Activated naive CD4-positive, alpha-beta T cell treated with anti-CD3 and anti-CD28 coated beads for 36 hours (primary cell): ENCODE measurements at regions of chr6 and their contacts with region 1.

Region 1: GRCh38 chr6:27188885-27189418 is 58.5 kb upstream of the PRSS16 start:
- DNase-seq: peak; percentile 67
- H3K4me3 Mint-ChIP-seq: peak overlapping the region; percentile 84
- H3K27ac Mint-ChIP-seq: no peak overlapping the region
- H3K4me1 Mint-ChIP-seq: peaks cover 9% of the 10 kb centered on the region
- H3K27me3 Mint-ChIP-seq: no peaks in the 10 kb centered on the region

Region 2: DNA sequence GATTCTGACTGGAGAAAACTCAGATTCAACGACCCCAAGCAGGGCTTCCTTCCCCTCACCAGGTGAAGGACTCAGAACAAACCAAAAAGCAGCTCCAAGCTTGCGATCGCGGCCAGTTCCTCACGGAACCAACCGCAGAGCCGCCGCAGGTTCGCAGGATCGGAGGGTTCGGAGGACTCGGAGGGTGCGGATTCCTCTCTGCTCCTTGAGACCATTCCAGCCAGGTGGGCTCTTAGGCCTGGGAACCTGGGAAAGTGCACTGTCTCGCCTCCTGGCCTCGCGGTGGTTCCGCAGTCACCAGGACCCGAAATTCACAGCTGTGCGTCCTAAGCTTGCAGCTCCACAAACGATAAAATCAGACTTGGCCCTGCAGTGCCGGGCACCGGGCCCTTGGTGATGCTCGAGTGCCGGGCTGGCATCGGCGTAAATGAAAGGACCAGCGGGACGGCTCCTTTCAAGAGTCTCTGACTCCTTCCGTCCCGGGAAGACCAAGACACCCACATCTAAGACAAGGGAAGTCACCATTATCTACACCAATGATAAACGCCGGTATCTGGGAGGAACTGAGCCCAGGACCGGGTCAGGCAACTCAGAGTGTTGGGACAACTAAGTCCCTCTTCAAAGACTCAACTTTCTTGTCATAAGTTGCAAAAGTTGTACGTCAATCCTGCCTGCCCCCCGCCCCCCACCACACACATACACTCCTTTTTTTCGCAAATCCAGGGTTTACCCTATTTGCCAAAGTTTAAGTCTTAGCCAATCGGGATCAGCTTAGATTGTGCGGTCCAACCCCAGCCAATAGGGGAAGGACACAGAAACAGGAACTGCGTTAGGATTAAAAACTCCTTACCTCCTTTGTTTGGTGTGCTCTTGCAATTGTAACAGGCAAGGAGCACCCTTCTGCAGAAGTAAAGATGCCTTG is 11.2 kb before region 1 on chr6:
- CTCF ChIA-PET with region 1: interaction called, 4 read pairs
- intact Hi-C with region 1: loop called (anchors 1 kb)
- DNase-seq: peak; percentile 83
- H3K4me3 Mint-ChIP-seq: peak overlapping the region; percentile 92
- H3K27ac Mint-ChIP-seq: peak overlapping the region; percentile 87
- H3K4me1 Mint-ChIP-seq: peaks cover 4% of the 10 kb centered on the region
- H3K27me3 Mint-ChIP-seq: peaks cover 6% of the 10 kb centered on the region

Region 3: DNA sequence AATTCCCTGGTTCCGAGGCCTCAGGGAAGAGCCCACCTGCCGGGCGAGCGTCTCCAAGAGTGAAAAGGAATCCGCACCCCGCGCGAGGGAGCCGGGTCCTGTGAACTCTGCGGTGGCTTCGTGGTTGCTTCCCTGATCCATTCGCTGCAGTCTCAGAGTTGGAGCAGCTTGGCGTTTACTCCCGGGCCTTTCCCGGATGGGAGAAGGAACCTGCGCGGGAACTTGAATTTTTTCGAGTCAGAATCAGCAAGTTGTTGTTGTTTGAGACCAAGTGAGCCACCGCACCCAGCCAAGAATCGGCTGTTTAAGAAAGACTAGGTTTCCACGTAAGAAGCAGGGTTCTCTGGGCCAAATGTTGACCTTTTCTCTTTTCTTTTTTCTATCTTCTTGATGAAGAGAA is 71.4 kb after region 1 on chr6:
- CTCF ChIA-PET with region 1: no interaction called
- intact Hi-C with region 1: no loop called
- DNase-seq: no peak
- H3K4me3 Mint-ChIP-seq: no peak overlapping the region
- H3K27ac Mint-ChIP-seq: no peak overlapping the region
- H3K4me1 Mint-ChIP-seq: peaks cover 8% of the 10 kb centered on the region
- H3K27me3 Mint-ChIP-seq: peaks cover 71% of the 10 kb centered on the region

Region 4: DNA sequence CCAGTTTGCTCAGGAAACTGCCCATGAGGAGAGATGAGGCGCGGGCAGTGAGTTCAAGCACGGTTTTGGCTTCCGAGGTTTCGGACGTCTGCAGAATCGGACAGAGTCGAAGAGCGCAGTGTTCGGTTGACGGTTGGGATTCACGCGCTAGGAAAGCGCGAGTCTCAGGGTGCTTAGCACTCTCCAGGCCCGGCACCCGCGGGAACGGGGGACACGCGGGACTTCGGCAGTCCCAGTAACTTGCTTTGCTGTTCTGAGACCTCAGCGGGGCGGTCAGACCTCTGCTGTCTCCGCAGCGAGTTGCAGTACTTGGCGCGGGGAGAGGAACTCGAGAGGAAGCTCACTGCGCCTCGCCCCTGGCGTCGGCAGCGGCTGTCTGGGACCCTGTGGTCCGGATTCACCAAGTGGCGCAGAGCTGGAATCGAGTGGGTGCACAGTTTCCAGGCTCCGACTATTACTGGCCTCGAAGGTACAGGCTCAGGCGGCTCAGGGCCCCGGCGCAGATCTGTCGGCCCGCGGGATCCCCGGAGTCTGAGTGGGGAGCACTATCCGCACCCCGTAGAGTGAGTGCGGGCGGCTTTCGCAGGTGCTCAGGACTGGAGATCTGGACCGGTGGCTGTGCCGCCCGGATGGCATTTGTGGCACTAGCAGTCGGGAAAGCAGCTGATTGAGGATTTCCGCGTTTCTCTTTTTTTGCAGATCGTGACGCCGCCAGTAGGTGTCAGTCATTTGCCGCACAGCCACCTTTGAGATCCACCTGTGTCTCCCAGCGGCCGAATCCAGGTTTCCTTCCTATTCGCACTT is 123.4 kb after region 1 on chr6 and contains the start of gene POM121L2:
- CTCF ChIA-PET with region 1: interaction called, 3 read pairs
- intact Hi-C with region 1: loop called (anchors 1 kb)
- DNase-seq: peak; percentile 79
- H3K4me3 Mint-ChIP-seq: peak within 1 kb of the TSS; percentile 72
- H3K27ac Mint-ChIP-seq: no peak within 1 kb of the TSS
- H3K4me1 Mint-ChIP-seq: peaks cover 10% of the 10 kb centered on the region
- H3K27me3 Mint-ChIP-seq: peaks cover 62% of the 10 kb centered on the region
- total RNA-seq, gene POM121L2: not detected

Region 5: DNA sequence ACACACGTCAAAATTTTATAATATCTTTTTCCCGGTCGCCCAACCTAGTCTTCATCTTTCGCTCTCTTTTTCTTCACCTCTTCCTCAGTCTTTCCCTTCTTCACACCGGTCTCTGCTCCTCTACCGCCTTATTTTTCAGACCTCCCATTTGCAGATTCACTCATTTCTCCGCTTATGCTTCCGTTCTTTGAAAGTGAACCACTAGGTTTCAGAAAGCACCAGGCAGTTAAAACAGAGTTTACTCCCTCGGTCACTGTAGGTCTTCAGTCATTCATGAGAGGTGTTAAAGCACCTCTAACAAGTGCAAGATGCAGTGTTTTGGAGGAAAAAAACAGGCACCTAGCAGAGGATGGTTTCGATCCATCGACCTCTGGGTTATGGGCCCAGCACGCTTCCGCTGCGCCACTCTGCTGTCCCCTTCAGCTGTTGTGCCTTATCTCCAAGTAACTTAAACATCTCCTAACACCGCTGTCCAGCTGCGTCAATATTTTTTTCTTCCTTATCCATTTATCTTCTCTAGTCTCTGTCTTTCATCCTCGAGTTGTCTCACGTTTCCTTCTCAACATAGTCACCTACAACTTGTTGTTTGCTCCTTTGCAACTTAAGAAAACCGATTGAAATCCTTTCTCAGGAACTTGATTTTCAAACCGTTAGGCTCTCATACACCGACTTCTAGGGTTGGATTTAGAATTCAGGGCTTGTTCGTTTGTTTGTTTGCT is 403.7 kb after region 1 on chr6:
- CTCF ChIA-PET with region 1: no interaction called
- intact Hi-C with region 1: loop called (anchors 5 kb)
- DNase-seq: peak; percentile 71
- H3K4me3 Mint-ChIP-seq: no peak overlapping the region
- H3K27ac Mint-ChIP-seq: no peak overlapping the region
- H3K4me1 Mint-ChIP-seq: no peaks in the 10 kb centered on the region
- H3K27me3 Mint-ChIP-seq: peaks cover 26% of the 10 kb centered on the region